HepG2 (cell line): ENCODE measurements at regions of chr10 and their contacts with region 1.

Region 1: DNA sequence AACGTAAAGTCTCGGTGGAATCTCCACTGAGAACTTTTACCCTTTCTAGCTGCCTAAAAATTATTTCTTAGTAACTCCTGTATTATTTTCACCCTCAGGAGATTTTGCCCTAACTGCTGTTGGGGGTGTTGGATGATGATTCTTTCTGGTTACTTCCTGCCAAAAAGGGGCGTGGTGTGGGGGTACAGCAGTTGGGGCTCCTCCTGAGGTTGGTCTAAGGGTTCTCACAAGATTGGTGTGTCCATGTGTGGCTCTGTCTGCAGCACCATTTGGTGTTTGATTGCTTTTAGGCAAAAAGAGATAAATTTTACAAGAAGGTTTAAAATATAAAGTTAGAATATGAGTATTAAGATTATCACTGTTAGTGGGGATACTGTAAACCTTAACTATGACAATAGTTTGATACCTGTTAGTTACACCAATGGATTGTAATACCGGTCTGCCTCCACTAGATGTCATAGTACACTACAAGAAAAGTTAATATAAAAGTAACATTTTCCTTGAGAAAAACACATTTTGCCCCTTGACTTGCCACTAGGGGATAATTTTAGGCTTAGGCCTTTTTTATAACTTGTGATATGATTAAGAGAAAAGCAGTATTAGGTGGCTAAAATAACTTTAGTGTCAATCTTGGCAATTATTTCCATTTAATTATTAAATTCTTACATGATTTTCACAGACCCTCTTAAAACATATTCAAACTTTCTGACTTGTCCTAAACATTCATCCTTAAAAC is 928.7 kb downstream of the IPMK start:
- DNase-seq: peak; percentile 45
- ATAC-seq: peak; percentile 54; the same call in 2 of the 3 replicates
- H3K4me3 ChIP-seq: no peak overlapping the region
- H3K27ac ChIP-seq: no peak overlapping the region
- H3K4me1 ChIP-seq: no peaks in the 10 kb centered on the region
- H3K27me3 ChIP-seq: no peaks in the 10 kb centered on the region
- CTCF ChIP-seq: peak; percentile 55
- EP300 ChIP-seq: no peak
- POLR2A ChIP-seq: no peak
- RAD21 ChIP-seq: no peak

Region 2: DNA sequence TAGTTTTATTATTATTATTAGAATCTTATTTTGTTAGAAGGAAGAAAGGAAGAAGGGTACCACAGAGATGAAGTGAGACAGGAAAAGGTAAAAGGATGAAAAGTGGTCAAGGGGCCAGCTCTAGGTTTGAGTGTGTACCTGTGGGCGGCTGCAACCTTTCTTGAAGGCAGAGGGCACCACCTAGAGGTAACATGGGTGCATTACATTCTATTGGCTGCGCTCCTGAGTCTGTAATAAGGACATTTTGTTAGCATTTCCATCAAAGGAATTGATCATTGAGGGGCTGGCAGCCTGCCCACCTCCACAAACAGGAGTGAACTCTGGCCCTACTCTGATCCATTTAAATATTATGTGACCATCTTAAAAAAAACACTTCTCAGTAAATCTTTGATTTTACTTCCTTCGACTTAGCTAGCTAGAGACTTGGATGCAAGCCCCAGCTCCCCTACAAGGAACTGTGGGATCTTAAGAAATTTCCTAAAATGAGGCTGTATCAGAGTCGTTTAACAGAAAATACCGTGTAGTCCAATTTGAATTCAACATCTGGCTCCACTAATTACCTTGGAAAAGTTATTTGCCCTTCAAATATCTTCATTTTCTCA is 318.3 kb after region 1 on chr10:
- CTCF ChIA-PET with region 1: interaction called, 33 read pairs
- POLR2A ChIA-PET with region 1: no interaction called
- in situ Hi-C with region 1: loop called (anchors 10 kb)
- intact Hi-C with region 1: loop called (anchors 1 kb)
- DNase-seq: peak; percentile 53
- ATAC-seq: peak; percentile 93
- H3K4me3 ChIP-seq: no peak overlapping the region
- H3K27ac ChIP-seq: no peak overlapping the region
- H3K4me1 ChIP-seq: no peaks in the 10 kb centered on the region
- H3K27me3 ChIP-seq: no peaks in the 10 kb centered on the region
- CTCF ChIP-seq: peak; percentile 85
- EP300 ChIP-seq: no peak
- POLR2A ChIP-seq: no peak
- RAD21 ChIP-seq: peak; percentile 83

Region 3: DNA sequence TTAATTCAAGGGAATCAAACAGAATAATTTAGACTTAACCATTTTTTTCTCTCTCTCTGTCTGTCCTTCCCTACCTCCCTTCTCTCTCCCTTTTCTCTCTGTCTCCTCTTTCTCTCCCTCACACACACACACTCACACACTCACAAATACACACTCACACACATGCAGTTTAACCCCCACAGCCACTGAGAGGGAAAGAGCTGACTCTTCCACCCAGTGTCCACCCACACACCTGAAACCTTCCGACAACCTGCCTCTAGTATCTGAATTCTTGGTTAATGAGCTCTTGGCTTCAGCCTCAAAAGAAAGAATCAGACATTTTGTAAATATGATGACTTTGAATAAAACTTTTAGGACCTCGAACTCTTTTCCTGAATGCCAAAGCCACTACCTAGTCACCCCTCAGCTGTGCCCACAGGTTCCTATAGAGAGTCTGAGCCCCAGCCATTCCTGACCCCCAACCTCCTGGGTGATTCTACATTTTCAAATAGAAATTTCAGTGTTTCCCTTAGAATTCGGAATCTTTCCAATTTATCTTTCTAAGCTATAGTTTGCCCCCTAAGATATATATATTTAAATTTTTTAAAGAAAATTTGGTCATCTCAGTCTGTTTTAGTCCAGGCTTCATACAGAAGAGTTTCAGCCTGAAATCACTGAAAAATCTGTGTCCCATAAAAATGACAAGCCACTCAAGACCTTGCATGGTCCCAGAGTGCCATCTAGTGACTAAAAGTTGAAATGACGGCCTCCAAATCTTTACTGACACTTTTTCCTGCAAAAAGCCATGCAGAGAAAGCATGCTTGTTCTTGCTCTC is 725.9 kb after region 1 on chr10:
- CTCF ChIA-PET with region 1: interaction called, 21 read pairs
- POLR2A ChIA-PET with region 1: no interaction called
- in situ Hi-C with region 1: loop called (anchors 25 kb)
- intact Hi-C with region 1: loop called (anchors 1 kb)
- DNase-seq: peak; percentile 35
- ATAC-seq: peak; percentile 46
- H3K4me3 ChIP-seq: no peak overlapping the region
- H3K27ac ChIP-seq: no peak overlapping the region
- H3K4me1 ChIP-seq: no peaks in the 10 kb centered on the region
- H3K27me3 ChIP-seq: peaks cover 0 to 5% of the 10 kb centered on the region in 2 experiments; a peak in 1 of 5 replicates
- CTCF ChIP-seq: peak; percentile 75
- EP300 ChIP-seq: no peak
- POLR2A ChIP-seq: no peak
- RAD21 ChIP-seq: peak; percentile 74; the same call in 1 of the 2 replicates

Region 4: DNA sequence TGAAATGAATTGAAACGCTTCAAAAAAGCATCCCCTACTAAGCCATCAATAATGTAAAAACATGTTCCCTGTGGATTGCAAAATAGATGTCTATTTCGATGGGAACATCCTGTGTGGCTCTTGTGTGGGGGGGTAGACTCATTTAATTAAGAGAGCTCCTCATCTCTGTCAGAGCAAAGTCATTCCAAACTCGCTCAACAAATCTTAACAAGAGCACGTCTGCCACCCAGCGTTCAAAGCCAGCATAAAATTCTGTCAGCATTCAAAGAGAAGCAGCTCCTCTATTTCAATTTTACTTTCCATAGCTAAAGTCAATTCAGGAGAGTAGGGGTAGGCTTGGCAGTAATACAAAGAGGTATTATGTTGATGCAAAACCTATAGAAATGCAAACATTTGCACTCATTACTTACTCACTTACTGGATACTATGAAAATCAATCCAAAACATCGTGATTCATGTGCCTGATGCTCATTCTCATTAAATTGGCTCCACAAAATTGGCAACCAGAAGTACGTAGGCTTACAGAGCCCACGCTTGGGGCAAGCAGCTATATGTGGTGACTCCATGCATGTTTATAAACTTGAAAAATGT is 813.8 kb after region 1 on chr10:
- CTCF ChIA-PET with region 1: no interaction called
- POLR2A ChIA-PET with region 1: no interaction called
- in situ Hi-C with region 1: no loop called
- intact Hi-C with region 1: loop called (anchors 5 kb)
- DNase-seq: peak; percentile 51
- ATAC-seq: peak; percentile 54; the same call in 2 of the 3 replicates
- H3K4me3 ChIP-seq: no peak overlapping the region
- H3K27ac ChIP-seq: no peak overlapping the region
- H3K4me1 ChIP-seq: peaks cover 33% of the 10 kb centered on the region
- H3K27me3 ChIP-seq: no peaks in the 10 kb centered on the region
- CTCF ChIP-seq: peak; percentile 67
- EP300 ChIP-seq: no peak
- POLR2A ChIP-seq: no peak
- RAD21 ChIP-seq: peak; percentile 32